Transverse colon (tissue), 4 donors: ENCODE measurements at regions of chr12 and their contacts with region 1.

Region 1: GRCh38 chr12:34398706-34399630 is 376.7 kb downstream of the ALG10 start:
- DNase-seq: peak; percentile 1
- H3K4me3 ChIP-seq: no peak overlapping the region
- H3K27ac ChIP-seq: no peak overlapping the region
- H3K4me1 ChIP-seq: no peaks in the 10 kb centered on the region
- H3K27me3 ChIP-seq: no peaks in the 10 kb centered on the region
- CTCF ChIP-seq: no peak
- EP300 ChIP-seq: no peak
- POLR2A ChIP-seq: no peak

Region 2: GRCh38 chr12:34244608-34245007 is 154.4 kb before region 1 on chr12:
- in situ Hi-C with region 1: no loop called
- intact Hi-C with region 1: no loop called
- DNase-seq: no peak
- H3K4me3 ChIP-seq: no peak overlapping the region
- H3K27ac ChIP-seq: no peak overlapping the region
- H3K4me1 ChIP-seq: no peaks in the 10 kb centered on the region
- H3K27me3 ChIP-seq: no peaks in the 10 kb centered on the region
- CTCF ChIP-seq: no peak
- EP300 ChIP-seq: no peak
- POLR2A ChIP-seq: no peak

Region 3: DNA sequence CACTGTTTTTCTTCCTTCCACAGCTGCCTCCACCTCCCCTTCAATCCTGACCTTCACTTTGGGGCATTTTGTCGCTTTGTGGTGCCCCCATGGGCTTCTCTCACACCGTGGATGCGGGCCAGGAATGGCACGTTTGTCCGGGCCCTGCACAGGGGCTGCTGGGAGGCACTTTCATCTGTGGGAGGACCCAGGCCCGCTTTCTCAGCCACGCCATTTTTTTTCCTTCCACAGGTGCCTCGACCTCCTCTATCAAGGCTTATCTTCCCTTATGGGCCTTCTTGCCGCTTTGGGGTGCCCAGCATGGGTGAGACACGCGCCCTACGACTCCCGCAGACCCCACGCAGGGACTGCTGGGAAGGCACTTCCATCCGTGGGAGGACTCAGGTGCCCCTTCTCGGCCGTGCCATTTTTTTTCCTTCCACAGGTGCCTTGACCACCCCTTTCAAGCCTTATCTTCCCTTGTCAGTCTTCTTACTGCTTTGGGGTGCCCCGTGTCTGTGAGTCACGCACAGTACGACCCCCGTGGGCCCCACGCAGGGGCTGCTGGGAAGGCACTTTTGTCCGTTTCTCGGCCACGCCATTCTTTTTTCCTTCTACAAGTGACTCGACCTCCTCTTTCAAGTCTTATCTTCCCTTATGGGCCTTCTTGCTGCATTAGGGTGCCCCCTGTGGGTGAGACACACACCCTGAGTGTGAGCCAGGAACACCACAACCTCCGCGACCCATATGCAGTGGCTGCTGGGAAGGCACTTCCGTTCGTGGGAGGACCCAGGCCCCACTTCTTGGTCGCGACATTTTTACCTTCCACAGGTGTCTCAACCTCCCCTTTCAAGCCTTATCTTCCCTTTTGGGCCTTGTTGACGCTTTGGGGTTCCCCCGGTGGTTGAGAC is 106.0 kb before region 1 on chr12:
- in situ Hi-C with region 1: loop called in 1 of 4 experiments (anchors 25 kb)
- intact Hi-C with region 1: no loop called
- DNase-seq: peak; percentile 1
- H3K4me3 ChIP-seq: no peak overlapping the region
- H3K27ac ChIP-seq: no peak overlapping the region
- H3K4me1 ChIP-seq: no peaks in the 10 kb centered on the region
- H3K27me3 ChIP-seq: no peaks in the 10 kb centered on the region
- CTCF ChIP-seq: no peak
- EP300 ChIP-seq: no peak
- POLR2A ChIP-seq: no peak